SK-N-SH (cell line): ENCODE measurements at regions of chr6 and their contacts with region 1.

Region 1: DNA sequence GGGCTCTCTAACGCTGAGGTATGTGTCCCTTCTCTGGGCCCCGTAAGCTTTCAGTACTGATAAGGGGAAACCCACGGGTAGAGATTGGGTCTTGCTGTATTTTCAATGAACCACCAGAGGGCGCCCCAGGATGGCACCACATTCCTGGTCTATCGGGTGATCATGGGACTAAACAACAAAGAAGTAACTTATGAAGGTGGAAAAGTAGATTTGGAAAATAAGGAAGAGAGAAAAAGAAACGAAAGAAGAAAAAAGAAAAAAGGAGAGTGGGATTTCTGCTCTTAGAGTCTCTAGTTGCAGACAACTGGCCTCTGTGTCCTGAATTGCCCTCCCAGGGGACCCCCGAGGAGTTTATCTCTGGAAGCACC is 93.8 kb downstream of the GMPR start:
- DNase-seq: peak; percentile 81
- H3K4me3 ChIP-seq: no peak overlapping the region; a peak in 1 of 4 replicates
- H3K27ac ChIP-seq: peak overlapping the region; percentile 51 to 75; a peak in 3 of 4 replicates
- H3K4me1 ChIP-seq: peaks cover 34 to 46% of the 10 kb centered on the region in 2 experiments
- H3K27me3 ChIP-seq: no peaks in the 10 kb centered on the region
- CTCF ChIP-seq: peak; percentile 96
- EP300 ChIP-seq: peak in 1 of 2 experiments; percentile 29; a peak in 1 of 4 replicates
- RAD21 ChIP-seq: peak; percentile 98

Region 2: DNA sequence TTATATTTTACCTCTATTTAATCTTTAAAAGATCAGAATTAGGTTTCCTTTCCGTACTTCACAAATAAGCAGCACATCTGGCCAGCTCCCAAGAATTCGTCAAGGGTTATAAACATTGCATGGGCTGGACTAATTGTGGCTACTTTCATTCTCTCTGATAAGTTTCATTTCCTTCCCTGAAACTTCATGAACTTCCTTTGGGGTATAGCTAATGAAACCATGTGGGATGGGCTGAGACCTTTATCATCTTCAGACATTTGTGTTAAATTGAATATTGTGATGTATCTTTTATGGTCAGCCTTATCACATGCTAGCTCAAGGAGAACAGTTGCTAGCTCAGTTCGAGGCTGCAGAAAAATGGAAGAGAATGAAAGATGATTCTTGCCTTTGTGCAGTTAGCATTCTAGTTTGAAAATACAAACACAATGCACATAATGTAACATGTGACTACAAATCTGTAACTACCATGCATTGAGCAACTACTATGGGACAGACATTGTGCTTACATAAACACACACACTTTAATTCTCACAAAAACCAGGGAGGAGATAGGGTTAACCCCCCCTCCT is 95.4 kb before region 1 on chr6:
- CTCF ChIA-PET with region 1: no interaction called
- POLR2A ChIA-PET with region 1: no interaction called
- DNase-seq: no peak
- H3K4me3 ChIP-seq: peak overlapping the region; percentile 14 to 34; a peak in 2 of 4 replicates
- H3K27ac ChIP-seq: peak overlapping the region; percentile 25 to 67; a peak in 3 of 4 replicates
- H3K4me1 ChIP-seq: peaks cover 0 to 6% of the 10 kb centered on the region in 2 experiments; a peak in 1 of 4 replicates
- H3K27me3 ChIP-seq: no peaks in the 10 kb centered on the region
- CTCF ChIP-seq: no peak
- EP300 ChIP-seq: no peak
- RAD21 ChIP-seq: no peak

Region 3: DNA sequence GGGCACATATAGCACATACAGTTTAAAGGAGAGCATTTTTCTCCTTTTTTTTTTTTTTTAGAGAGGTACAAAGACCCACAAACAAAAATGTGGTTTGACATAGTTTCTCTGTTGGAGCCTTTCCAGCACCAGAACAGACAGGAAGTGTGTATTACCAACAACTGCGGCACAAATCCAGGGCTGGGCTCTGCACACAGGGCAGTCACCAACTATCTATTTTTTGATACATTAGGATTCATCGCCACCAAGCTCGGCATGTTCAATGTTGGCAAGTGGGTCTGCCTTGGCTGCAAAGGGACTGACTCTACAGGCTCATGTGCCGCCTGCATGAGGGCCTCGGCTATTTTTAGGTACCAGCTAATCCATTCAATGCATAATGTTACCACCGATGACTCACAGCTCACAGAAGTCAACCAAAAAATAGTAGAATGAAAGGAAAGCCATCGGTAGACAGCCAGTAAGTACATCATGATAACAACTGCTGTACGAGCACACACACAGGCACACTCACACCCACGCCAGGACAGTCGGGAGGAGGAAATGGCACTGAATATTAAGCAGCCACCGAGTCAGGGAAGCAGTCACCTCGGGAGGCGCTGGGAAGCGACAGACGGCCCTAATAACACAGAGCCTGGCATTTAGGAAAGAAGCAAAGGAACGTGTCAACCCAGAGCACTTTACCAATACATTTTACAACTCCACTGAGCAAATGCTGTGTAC is 12.2 kb before region 1 on chr6:
- CTCF ChIA-PET with region 1: interaction called, 81 read pairs
- POLR2A ChIA-PET with region 1: no interaction called
- DNase-seq: no peak
- H3K4me3 ChIP-seq: peak overlapping the region; percentile 4 to 58; a peak in 3 of 4 replicates
- H3K27ac ChIP-seq: peak overlapping the region; percentile 56 to 94
- H3K4me1 ChIP-seq: peaks cover 13 to 57% of the 10 kb centered on the region in 2 experiments; a peak in 3 of 4 replicates
- H3K27me3 ChIP-seq: no peaks in the 10 kb centered on the region
- CTCF ChIP-seq: no peak
- EP300 ChIP-seq: no peak; a peak in 1 of 4 replicates
- RAD21 ChIP-seq: no peak

Region 4: DNA sequence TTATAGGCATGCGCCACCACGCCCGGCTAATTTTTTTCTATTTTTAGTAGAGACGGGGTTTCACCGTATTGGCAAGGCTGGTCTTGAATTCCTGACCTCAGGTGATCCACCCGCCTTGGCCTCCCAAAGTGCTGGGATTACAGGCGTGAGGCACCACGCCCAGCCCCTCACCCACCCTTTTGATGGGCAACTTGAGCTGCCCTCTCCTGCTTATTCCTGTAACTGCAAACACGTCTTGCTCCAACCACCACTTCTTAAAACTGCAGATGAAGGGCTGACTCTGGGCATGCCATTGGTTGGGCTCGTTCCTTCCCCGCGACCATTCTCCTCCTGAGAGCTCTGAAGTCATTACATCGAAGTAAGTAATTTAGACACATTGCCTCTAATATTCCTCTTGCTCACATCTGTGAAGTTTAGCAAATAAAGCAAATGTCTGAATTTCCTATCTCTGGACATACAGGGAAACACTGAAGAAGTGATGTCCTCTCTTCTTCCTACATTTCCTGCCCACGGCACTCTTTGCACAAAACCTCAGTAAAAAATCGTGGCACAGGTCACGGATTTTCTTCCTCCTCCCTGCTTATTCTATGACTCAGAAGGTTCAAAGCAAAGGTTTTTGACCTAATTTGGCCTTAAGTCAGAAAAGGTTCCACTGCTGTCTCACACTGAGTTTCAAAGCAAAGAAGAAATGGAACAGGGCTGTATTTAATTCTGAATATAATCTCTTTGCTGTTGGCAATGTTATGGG is 23.7 kb after region 1 on chr6:
- CTCF ChIA-PET with region 1: interaction called, 46 read pairs
- POLR2A ChIA-PET with region 1: no interaction called
- DNase-seq: no peak
- H3K4me3 ChIP-seq: no peak overlapping the region
- H3K27ac ChIP-seq: no peak overlapping the region; a peak in 1 of 4 replicates
- H3K4me1 ChIP-seq: peaks cover 8 to 38% of the 10 kb centered on the region in 2 experiments; a peak in 3 of 4 replicates
- H3K27me3 ChIP-seq: no peaks in the 10 kb centered on the region
- CTCF ChIP-seq: no peak
- EP300 ChIP-seq: no peak
- RAD21 ChIP-seq: no peak

Region 5: DNA sequence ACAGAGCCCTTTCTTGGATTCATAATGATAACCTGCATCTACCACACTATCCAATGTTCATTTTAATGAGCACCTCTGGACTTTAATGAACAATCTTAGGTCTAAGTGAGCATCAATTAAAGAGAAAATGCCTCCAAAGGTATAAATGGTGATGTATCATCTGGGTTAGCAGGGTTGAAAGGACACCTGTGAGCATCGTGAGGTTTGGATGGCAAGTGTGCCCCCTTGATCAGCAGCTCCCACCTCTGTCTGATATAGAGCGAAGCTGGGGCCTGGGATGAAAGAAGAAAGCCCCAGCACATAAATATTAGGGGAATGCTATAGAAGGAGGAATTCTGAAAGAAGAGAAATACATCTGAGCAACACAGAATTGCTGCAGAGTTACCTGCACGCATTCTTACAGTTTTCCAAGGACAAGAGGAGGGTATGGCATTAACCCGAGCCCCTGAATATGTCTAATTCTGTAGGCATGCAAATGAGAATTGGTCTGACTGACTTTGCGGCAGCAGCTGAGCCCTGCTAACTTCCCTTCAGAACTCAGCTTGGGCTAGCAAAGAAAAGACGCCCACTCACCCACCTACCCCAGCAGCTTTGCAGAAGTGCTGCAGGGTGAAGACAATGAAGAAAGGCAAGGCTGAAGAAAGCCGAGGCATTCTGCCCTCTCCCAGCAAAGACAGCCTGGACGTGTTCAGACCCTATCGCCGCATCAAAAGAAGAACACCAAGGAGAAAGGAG is 42.5 kb after region 1 on chr6:
- CTCF ChIA-PET with region 1: interaction called, 27 read pairs
- POLR2A ChIA-PET with region 1: interaction called, 5 read pairs
- DNase-seq: no peak
- H3K4me3 ChIP-seq: no peak overlapping the region
- H3K27ac ChIP-seq: no peak overlapping the region
- H3K4me1 ChIP-seq: peaks cover 0 to 21% of the 10 kb centered on the region in 2 experiments; a peak in 2 of 4 replicates
- H3K27me3 ChIP-seq: no peaks in the 10 kb centered on the region
- CTCF ChIP-seq: no peak
- EP300 ChIP-seq: no peak
- RAD21 ChIP-seq: no peak

Region 6: DNA sequence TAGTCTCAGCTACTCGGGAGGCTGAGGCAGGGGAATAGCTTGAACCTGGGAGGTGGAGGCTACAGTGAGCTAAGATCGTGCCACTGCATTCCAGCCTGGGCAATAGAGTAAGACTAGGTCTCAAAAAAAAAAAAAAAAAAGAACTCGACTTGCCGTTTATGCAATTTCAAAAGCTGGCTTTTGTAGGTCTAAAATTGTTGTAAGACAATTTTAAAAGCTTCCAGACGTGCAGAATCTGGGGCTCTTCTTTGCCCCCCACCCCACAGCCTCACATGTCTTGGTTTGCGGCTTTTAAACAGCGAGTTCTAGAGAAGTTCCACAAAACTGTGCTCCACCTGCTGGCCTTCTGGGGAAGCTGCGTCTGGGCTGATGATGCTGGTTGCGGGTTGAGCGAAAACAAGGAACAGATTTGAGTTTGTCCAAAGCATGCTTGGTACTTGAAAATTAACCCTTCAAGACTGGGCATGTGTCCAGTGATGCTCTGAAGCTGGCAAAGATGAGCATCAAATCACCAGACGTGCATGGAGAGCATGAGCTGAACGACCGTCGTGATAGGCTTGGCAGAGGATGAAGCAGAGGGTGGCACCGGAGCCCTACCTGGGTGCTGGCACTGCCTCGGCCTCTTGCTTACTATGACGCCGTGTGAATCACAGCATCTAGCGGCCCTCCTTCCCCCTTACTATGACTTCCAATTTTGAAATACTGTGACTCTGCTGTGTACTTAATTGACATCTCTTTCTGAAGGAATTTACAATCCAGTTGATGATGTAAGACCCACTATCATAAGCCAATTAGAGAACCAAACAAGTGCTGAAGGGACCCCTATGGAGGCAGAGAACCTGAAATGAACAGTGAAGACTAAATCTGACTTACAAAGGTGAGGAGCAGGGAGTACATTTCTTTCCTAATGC is 77.6 kb after region 1 on chr6:
- CTCF ChIA-PET with region 1: interaction called, 289 read pairs
- POLR2A ChIA-PET with region 1: no interaction called
- DNase-seq: peak; percentile 72
- H3K4me3 ChIP-seq: no peak overlapping the region; a peak in 1 of 4 replicates
- H3K27ac ChIP-seq: no peak overlapping the region; a peak in 1 of 4 replicates
- H3K4me1 ChIP-seq: peaks cover 0 to 11% of the 10 kb centered on the region in 2 experiments; a peak in 1 of 4 replicates
- H3K27me3 ChIP-seq: no peaks in the 10 kb centered on the region
- CTCF ChIP-seq: peak; percentile 93
- EP300 ChIP-seq: no peak
- RAD21 ChIP-seq: peak; percentile 86

Region 7: GRCh38 chr6:16511040-16511660 is 179.0 kb after region 1 on chr6:
- CTCF ChIA-PET with region 1: interaction called, 11 read pairs
- POLR2A ChIA-PET with region 1: no interaction called
- DNase-seq: peak; percentile 38
- H3K4me3 ChIP-seq: no peak overlapping the region
- H3K27ac ChIP-seq: no peak overlapping the region
- H3K4me1 ChIP-seq: peaks cover 2 to 3% of the 10 kb centered on the region in 2 experiments; a peak in 2 of 4 replicates
- H3K27me3 ChIP-seq: no peaks in the 10 kb centered on the region
- CTCF ChIP-seq: peak; percentile 75
- EP300 ChIP-seq: no peak
- RAD21 ChIP-seq: peak; percentile 54